ENCODE measurements at regions of chr1 and their contacts with region 1.

Region 1: DNA sequence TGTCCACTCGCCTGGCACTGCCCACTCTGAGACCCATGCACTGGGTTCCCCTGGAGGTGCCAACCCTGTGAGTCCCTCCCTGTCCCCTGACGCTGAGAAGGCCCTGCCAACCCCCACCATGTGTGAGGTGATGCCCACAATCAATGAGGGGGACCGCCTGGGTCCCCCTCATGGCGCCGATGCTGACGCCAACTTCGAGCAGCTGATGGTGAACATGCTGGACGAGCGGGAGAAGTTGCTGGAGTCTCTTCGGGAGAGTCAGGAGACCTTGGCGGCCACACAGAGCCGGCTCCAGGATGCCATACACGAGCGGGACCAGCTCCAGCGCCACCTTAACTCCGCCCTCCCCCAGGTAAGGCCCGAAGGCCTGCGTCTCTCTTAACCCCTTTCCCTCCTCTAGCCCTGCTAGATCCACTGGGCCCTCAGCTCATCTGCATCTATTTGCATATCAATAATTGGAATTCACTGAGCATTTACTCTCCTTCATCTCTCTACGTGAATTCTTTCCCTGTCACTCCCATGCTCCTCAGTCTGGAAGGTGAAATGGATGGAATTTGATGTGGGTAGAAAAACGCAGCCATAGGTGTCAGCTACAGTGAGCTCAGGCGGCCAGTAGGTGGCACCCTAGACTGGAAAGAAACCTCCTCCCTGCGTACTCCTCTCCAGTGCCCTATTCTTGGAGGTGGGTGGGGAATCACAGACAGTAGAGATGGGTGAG is 12.8 kb downstream of the PPFIA4 start:
- DNase-seq: peak; percentile 73 to 79
- ATAC-seq: peak; percentile 69 to 89 (median 82)
- H3K4me3 ChIP-seq: peak overlapping the region in 1 of 10 donors; percentile 6
- H3K27ac ChIP-seq: peak overlapping the region in 8 of 10 donors; percentile 58 to 89 (median 84)
- H3K4me1 ChIP-seq: peaks cover 5 to 76% (median 42%) of the 10 kb centered on the region in 9 donors
- H3K27me3 ChIP-seq: peaks cover 0 to 6% (median 0%) of the 10 kb centered on the region in 7 donors
- CTCF ChIP-seq: peak; percentile 86 to 95 (median 91)

Region 2: DNA sequence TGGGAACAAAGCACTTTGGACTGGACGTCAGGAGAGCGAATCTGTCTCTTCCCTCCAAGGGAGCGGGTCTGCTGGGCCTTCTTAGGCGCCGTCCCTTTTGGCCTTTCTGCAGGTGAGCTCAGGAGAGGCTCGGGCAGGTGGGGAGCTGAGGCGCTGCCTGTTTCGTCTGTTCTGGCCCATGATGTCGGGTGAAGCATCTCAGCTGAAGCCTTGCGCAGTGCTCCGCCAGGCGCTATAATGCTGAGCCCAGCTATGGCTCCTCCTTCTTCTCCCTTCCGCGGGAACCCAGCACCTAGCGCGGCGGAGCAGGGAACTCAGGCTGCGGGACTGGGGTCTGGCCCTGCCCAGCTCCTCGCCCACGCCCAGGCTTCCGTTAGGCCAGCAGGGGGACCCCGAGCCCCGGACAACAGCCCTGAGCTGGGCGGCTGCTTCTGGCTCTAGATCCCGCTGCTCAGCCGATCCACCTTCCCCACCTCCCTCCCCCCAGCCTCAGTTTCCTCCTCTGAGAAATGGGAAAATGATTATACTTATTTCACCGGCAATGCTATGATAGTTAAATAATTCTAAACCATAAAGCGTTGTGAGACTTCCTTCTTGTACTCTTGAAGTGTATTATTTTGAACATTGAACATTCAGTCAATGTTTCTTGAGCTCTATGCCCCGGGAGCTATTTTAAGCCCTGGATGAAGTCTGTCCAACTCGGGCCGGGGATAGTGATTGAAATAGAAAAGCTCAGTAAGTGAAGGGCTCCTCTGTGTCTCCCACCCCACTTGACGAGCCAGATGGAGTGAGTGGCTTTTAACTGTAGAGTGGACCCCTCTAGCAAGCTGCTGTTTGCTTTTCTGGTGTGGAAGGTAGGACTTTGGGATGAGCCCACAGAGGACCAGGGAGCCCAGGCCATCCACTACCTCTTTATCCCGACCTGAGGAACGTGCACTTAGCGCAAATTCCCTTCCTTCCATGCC is 78.8 kb after region 1 on chr1:
- intact Hi-C with region 1: loop called in 4 of 10 experiments (anchors 5 kb)
- DNase-seq: peak; percentile 65 to 81
- ATAC-seq: peak; percentile 92 to 97 (median 94)
- H3K4me3 ChIP-seq: no peak overlapping the region
- H3K27ac ChIP-seq: no peak overlapping the region
- H3K4me1 ChIP-seq: peaks cover 0 to 12% (median 6%) of the 10 kb centered on the region in 9 donors
- H3K27me3 ChIP-seq: peaks cover 0 to 70% (median 39%) of the 10 kb centered on the region in 7 donors
- CTCF ChIP-seq: peak; percentile 49 to 88 (median 81)

Region 3: DNA sequence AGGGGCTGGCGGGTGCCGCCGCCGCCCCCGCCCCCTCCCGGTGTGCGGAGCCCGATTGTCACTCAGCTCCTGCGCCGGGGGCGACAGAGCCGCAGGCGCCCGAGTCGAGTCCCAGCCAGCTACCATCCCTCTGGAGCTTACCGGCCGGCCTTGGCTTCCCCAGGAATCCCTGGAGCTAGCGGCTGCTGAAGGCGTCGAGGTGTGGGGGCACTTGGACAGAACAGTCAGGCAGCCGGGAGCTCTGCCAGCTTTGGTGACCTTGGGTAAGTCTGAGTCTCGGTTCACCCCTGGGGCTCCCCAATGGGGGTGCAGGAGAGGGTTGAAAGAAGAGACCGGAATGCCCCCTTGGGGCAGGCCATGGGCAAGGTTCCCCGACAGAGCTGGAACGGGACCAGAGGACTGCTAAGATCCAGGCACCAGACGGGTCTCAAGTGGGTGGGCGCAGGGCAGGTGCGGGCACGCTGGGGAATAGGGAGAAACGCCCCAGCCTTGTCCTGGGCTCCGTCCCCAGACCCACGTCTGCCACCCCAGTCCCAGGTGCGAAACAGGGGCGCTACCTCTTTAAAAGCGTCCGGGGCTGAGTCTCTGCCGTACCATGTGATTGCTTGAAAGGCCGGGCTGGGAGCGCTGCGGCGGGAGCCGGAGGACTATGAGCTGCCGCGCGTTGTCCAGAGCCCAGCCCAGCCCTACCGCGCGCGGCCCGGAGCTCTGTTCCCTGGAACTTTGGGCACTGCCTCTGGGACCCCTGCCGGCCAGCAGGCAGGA is 88.8 kb after region 1 on chr1 and contains the start of gene ADORA1:
- intact Hi-C with region 1: loop called in 6 of 10 experiments (anchors 5 kb)
- DNase-seq: peak; percentile 62 to 65
- ATAC-seq: peak; percentile 83 to 88 (median 84)
- H3K4me3 ChIP-seq: peak within 1 kb of the TSS in 9 of 10 donors; percentile 29 to 58 (median 49)
- H3K27ac ChIP-seq: peak within 1 kb of the TSS; percentile 58 to 91 (median 81)
- H3K4me1 ChIP-seq: peaks cover 23 to 70% (median 49%) of the 10 kb centered on the region in 9 donors
- H3K27me3 ChIP-seq: peaks cover 0 to 71% (median 21%) of the 10 kb centered on the region in 7 donors
- CTCF ChIP-seq: peak in 2 of 9 donors; percentile 15 to 26
- total RNA-seq, gene ADORA1: 5.1 to 12.2 (median 9.3) TPM

Region 4: DNA sequence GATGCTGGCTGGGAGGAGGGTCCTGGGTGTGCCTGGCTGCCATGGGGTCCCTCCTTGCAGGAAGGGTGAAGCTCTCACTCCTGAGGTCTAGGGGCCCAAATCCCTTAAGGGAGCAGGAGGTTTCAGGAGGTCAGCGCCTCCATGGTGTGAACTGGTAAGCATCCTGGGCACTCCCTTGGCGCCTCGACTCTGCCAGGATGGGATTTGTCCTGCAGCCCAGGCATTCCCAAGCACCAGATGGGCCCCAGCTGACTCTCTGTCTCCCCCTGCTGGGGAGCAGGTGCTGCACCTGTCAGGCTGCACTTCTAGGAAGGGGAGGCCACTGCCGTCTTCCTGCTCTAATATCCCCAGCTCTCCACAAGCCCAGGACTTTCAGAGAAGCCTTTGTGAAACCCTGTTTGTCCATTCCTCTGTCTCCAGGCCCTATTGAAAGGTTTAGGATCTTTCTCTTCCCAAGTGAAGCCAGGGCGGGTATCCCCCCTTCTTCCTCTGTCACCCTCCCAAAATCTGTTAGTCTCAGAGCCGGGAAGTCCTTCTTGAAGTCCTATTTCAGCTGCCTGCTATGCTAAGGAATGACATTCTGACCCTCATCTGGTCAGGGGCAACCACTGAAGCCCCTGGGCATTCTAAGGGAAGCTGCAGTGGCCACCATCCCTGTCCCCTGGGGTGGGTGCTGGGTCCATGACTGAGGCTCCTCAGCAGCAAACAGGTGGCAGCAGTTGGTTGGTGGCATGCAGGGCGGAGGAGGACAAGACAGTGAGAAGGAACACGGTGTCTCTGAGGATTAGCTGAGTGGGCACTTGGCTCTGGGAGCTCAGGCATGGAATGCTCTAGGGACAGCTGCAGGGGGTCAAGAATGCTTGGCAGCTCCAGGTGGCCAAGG is 133.3 kb after region 1 on chr1:
- intact Hi-C with region 1: loop called in 6 of 10 experiments (anchors 2 to 5 kb)
- DNase-seq: peak; percentile 56
- ATAC-seq: peak; percentile 57 to 82 (median 72)
- H3K4me3 ChIP-seq: no peak overlapping the region
- H3K27ac ChIP-seq: no peak overlapping the region
- H3K4me1 ChIP-seq: peaks cover 0 to 16% (median 0%) of the 10 kb centered on the region in 9 donors
- H3K27me3 ChIP-seq: peaks cover 0 to 4% (median 0%) of the 10 kb centered on the region in 7 donors
- CTCF ChIP-seq: peak; percentile 62 to 87 (median 80)

Region 5: DNA sequence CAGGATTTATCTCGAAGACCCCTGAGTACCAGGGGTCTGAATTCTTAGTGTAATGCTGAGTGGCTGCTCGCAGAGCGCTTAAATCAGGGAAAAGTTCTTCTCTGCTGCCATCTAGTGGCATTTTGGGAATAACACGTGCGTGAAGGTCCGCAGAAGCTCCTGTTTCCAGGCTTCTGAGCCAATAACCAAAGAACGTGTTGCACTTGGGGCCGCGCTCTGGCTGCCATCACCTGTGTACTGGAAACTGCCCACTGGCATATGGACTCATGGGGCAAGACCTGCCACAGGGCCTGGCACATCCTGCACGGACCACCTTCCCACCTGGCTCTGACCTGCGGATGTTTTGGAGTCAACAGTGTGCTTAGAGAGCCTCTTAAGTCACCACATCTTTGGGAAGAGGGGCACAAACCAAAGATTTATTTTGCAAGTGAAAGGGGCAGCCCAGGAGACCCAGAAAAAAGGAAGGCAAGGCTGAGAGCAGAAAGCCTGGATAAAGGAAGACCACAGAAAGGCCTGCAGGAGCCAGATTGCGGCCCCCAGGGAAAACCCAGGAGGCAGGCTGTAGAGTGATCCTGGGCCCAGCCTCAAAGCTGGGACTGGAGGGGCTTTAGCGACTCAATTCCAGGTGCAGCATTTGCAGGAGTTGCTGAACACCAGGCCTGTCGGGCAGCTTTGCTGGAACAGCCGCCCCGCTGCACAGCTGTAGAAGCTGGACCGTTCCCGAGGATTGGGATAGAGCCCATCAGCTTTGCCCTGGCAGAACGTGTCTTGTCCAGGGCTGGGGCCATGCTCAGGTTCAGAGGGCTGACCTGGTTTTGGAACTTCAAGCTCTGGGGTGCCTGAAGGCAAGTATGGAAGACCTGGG is 177.5 kb after region 1 on chr1:
- intact Hi-C with region 1: loop called (anchors 1 to 2 kb)
- DNase-seq: peak in 1 of 2 donors; percentile 58
- ATAC-seq: peak; percentile 55 to 88 (median 76)
- H3K4me3 ChIP-seq: no peak overlapping the region
- H3K27ac ChIP-seq: no peak overlapping the region
- H3K4me1 ChIP-seq: peaks cover 0 to 15% (median 0%) of the 10 kb centered on the region in 9 donors
- H3K27me3 ChIP-seq: peaks cover 0 to 16% (median 11%) of the 10 kb centered on the region in 7 donors
- CTCF ChIP-seq: peak; percentile 75 to 91 (median 82)

Region 6: GRCh38 chr1:203267347-203267846 is 228.3 kb after region 1 on chr1:
- intact Hi-C with region 1: loop called in 5 of 10 experiments (anchors 1 to 5 kb)
- DNase-seq: peak; percentile 83 to 87
- ATAC-seq: peak; percentile 60 to 83 (median 74)
- H3K4me3 ChIP-seq: peak overlapping the region in 9 of 10 donors; percentile 37 to 65 (median 59)
- H3K27ac ChIP-seq: peak overlapping the region; percentile 28 to 92 (median 82)
- H3K4me1 ChIP-seq: peaks cover 3 to 25% (median 15%) of the 10 kb centered on the region in 9 donors
- H3K27me3 ChIP-seq: no peaks in the 10 kb centered on the region
- CTCF ChIP-seq: peak; percentile 85 to 99 (median 95)

Measured in heart right ventricle (tissue), 16 donors.